ENCODE measurements at regions of chr11 and their contacts with region 1.

Region 1: DNA sequence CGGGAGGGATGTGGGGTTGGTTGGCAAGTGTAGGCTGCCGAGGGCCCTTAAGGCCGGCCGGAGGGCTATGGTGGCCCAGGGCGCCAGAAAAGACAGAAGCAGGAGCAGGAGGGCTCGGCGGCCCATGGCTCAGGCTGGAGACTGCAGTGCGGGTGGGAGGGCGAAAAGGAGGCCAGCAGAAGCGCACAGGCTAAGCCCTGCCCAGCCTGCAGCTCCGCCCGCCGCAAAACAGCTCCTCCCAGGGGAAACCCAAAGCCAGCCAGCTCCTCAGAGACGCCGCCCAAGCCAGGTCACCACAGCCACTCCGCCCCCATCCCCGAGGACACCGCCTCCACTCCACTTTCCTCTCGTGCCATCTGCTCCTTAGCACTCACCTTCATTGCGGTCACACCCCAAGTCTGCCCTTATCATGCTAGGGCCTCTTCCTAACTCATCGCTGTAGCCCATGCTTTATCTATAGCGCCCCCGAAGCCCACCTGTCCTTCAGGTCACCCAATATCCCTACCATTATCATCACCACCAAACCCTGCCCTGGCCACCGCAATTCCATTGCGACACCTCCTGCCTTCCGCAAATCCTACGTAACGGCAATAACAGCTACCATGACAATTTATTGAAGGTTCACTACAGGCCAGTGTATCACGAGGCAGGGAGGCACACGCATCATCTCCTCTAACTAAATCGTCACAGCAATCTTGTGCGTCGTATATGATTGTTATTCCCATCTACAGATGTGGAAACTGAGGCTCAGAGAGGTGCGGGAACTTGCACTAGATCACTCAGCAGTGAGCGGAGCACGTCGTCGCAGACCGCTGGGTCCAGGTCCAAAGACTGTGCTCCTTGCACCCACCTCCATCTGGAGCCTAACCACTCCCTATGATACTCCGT is at the start of gene PRCP:
- DNase-seq: peak; percentile 95
- H3K4me3 ChIP-seq: peak within 1 kb of the TSS; percentile 78 to 90
- H3K27ac ChIP-seq: peak within 1 kb of the TSS; percentile 94 to 95
- H3K4me1 ChIP-seq: peaks cover 9% of the 10 kb centered on the region
- H3K27me3 ChIP-seq: no peaks in the 10 kb centered on the region
- CTCF ChIP-seq: no peak
- POLR2A ChIP-seq: peak; percentile 48
- total RNA-seq, gene PRCP: 41.3 to 46.9 TPM

Region 2: GRCh38 chr11:83071567-83072349 is 171.2 kb after region 1 on chr11 and contains the start of gene RAB30:
- intact Hi-C with region 1: loop called (anchors 10 kb)
- DNase-seq: peak; percentile 99
- H3K4me3 ChIP-seq: peak within 1 kb of the TSS; percentile 71 to 79
- H3K27ac ChIP-seq: peak within 1 kb of the TSS; percentile 89 to 93
- H3K4me1 ChIP-seq: peaks cover 12% of the 10 kb centered on the region
- H3K27me3 ChIP-seq: no peaks in the 10 kb centered on the region
- CTCF ChIP-seq: peak in 1 of 3 experiments; percentile 1
- POLR2A ChIP-seq: peak; percentile 73
- total RNA-seq, gene RAB30: 12.3 to 13.1 TPM

Region 3: GRCh38 chr11:83193315-83194280 is 293.1 kb after region 1 on chr11 and contains the start of gene ANKRD42:
- intact Hi-C with region 1: loop called (anchors 10 kb)
- DNase-seq: peak; percentile 98
- H3K4me3 ChIP-seq: peak within 1 kb of the TSS; percentile 68 to 87
- H3K27ac ChIP-seq: peak within 1 kb of the TSS; percentile 89 to 91
- H3K4me1 ChIP-seq: peaks cover 27% of the 10 kb centered on the region
- H3K27me3 ChIP-seq: no peaks in the 10 kb centered on the region
- CTCF ChIP-seq: no peak
- POLR2A ChIP-seq: peak; percentile 83
- total RNA-seq, gene ANKRD42: 49.8 to 66.1 TPM

Region 4: GRCh38 chr11:83574516-83574915 is 674.0 kb after region 1 on chr11:
- intact Hi-C with region 1: no loop called
- DNase-seq: no peak
- H3K4me3 ChIP-seq: no peak overlapping the region
- H3K27ac ChIP-seq: no peak overlapping the region
- H3K4me1 ChIP-seq: no peaks in the 10 kb centered on the region
- H3K27me3 ChIP-seq: no peaks in the 10 kb centered on the region
- CTCF ChIP-seq: no peak
- POLR2A ChIP-seq: no peak

Measured in testis (tissue), 5 donors.